A673 (cell line): ENCODE measurements at regions of chr1 and their contacts with region 1.

Region 1: DNA sequence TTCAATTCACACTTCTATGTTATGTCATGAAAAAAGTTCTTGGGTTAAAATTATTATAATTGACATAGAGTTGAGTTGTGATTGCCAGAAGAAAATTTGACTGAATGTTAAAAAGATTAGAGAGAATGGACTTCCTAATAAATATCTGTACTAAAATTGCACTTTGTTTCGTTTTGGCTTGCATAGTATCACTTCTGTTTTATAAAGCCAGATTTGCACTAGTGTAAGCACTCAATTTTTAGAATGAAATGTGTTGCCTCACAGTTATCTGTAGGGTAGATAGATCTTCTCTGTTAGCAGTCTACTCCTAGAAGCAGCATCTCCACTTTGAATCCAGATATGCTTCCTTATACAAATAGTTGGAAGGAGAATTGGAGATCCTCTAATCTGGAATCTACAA is 95.2 kb upstream of the MPC2 start:
- DNase-seq: no peak
- H3K4me3 ChIP-seq: no peak overlapping the region
- H3K27ac ChIP-seq: no peak overlapping the region
- H3K4me1 ChIP-seq: no peaks in the 10 kb centered on the region
- H3K27me3 ChIP-seq: no peaks in the 10 kb centered on the region
- CTCF ChIP-seq: no peak

Region 2: GRCh38 chr1:167922023-167922422 is 110.0 kb before region 1 on chr1:
- CTCF ChIA-PET with region 1: no interaction called
- POLR2A ChIA-PET with region 1: interaction called, 12 read pairs
- intact Hi-C with region 1: no loop called
- DNase-seq: no peak
- H3K4me3 ChIP-seq: no peak overlapping the region
- H3K27ac ChIP-seq: no peak overlapping the region
- H3K4me1 ChIP-seq: peaks cover 3% of the 10 kb centered on the region
- H3K27me3 ChIP-seq: no peaks in the 10 kb centered on the region
- CTCF ChIP-seq: no peak

Region 3: DNA sequence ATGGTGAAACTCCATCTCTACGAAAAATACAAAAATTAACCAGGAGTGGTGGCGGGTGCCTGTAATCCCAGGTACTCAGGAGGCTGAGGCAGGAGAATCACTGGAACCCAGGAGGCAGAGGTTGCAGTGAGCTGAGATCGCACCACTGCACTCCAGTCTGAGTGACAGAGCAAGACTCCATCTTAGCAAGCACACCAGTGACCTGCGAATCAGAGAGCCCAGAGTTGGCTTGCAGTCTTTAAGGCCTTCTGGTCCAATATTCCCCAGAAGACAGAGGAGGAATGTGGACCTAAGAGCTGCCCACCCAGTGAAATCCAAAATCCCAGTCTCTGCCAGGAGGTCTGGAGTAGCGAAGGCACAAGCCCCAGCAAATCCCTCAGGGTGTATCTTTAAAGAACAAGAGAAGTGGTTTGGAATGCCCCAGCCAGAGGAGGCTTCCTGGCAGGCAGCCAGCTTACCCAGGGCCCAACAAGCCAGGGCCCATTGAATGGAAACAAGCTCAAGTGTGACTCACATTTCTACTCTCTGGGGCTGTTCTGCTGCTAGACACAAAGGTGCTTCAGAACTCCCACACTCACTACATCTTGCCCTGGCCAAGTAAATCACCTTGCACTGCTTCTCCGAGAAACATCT is 80.8 kb after region 1 on chr1:
- CTCF ChIA-PET with region 1: no interaction called
- POLR2A ChIA-PET with region 1: no interaction called
- intact Hi-C with region 1: no loop called
- DNase-seq: peak; percentile 83
- H3K4me3 ChIP-seq: no peak overlapping the region
- H3K27ac ChIP-seq: no peak overlapping the region
- H3K4me1 ChIP-seq: no peaks in the 10 kb centered on the region
- H3K27me3 ChIP-seq: no peaks in the 10 kb centered on the region
- CTCF ChIP-seq: no peak

Region 4: GRCh38 chr1:168179438-168180147 is 147.6 kb after region 1 on chr1:
- CTCF ChIA-PET with region 1: no interaction called
- POLR2A ChIA-PET with region 1: no interaction called
- intact Hi-C with region 1: no loop called
- DNase-seq: peak; percentile 23
- H3K4me3 ChIP-seq: peak overlapping the region; percentile 85
- H3K27ac ChIP-seq: peak overlapping the region; percentile 85
- H3K4me1 ChIP-seq: peaks cover 10% of the 10 kb centered on the region
- H3K27me3 ChIP-seq: no peaks in the 10 kb centered on the region
- CTCF ChIP-seq: no peak